ENCODE measurements at regions of chr19 and their contacts with region 1.

Region 1: GRCh38 chr19:11137542-11138384 is 17.8 kb downstream of the SPC24 start:
- DNase-seq: peak; percentile 21
- H3K4me3 Mint-ChIP-seq: peak overlapping the region; percentile 82
- H3K27ac Mint-ChIP-seq: no peak overlapping the region
- H3K4me1 Mint-ChIP-seq: peaks cover 8% of the 10 kb centered on the region
- H3K27me3 Mint-ChIP-seq: no peaks in the 10 kb centered on the region

Region 2: GRCh38 chr19:11155373-11156120 is 17.8 kb after region 1 on chr19 and contains the start of gene SPC24:
- intact Hi-C with region 1: loop called (anchors 2 kb)
- DNase-seq: peak; percentile 94
- H3K4me3 Mint-ChIP-seq: peak within 1 kb of the TSS; percentile 84
- H3K27ac Mint-ChIP-seq: peak within 1 kb of the TSS; percentile 89
- H3K4me1 Mint-ChIP-seq: peaks cover 7% of the 10 kb centered on the region
- H3K27me3 Mint-ChIP-seq: no peaks in the 10 kb centered on the region
- total RNA-seq, gene SPC24: 30.3 and 30.4 TPM in 2 replicates

Region 3: DNA sequence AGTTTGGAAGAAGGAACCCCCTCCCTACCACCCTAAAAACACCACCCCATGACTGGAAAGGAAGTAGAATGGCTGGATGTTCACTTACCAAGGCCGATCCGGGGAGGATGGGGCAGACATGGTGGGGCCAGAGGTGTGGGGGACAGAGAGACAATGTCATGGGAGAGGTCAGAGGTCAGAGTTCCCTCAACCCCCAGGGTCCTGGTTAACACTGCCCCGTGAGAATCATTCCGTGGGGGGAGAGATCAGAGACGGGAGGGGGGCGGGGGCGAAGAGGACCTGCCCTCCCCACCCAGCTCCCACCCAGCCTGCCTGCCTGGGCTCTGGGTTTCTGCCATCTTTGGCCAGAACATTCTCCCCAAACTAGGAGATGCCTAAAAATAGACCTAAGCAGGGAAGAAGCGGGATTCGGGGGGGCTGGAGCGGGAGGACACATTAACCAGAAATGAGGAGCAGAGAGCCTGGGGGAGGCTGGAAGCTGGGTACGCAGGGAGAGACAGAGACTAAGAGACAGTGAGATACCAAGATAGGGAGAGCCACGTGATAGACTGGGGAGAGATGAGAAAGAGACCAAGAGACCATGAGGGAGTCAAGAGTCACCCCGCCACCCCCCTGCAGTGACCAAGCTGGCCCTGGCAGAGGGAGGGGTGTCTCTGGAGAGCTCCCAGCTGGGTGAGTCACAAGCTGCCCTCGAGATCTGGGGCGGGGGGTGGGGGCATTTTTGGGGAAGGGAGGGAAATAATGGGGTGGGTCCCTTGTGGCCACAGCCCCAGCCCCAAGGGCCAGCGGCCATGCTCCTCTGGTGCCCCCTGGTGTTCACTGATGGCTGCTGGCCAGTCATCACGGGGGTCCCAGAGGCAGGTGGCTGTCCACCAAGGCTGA is 65.7 kb after region 1 on chr19:
- intact Hi-C with region 1: loop called (anchors 1 kb)
- DNase-seq: no peak
- H3K4me3 Mint-ChIP-seq: no peak overlapping the region
- H3K27ac Mint-ChIP-seq: no peak overlapping the region
- H3K4me1 Mint-ChIP-seq: no peaks in the 10 kb centered on the region
- H3K27me3 Mint-ChIP-seq: peaks cover 6% of the 10 kb centered on the region

Measured in activated T-helper 1 cell treated with anti-CD3 and anti-CD28 coated beads, Interleukin-12 subunit alpha, Interleukin-12 subunit beta, Interleukin-2, Interleukin-4 antibody, amounts not matched to agents 30 ng/mL and 10 ng/mL and 1 ng/mL, durations not matched to agents 14 hours and 24 hours and 36 hours (primary cell).